ENCODE measurements at regions of chr9 and their contacts with region 1.

Region 1: GRCh38 chr9:109699019-109699418 is 81.0 kb upstream of the PALM2AKAP2 start:
- DNase-seq: no peak
- ATAC-seq: no peak
- H3K4me3 ChIP-seq: no peak overlapping the region
- H3K27ac ChIP-seq: no peak overlapping the region
- H3K4me1 ChIP-seq: no peaks in the 10 kb centered on the region
- H3K27me3 ChIP-seq: no peaks in the 10 kb centered on the region
- CTCF ChIP-seq: no peak
- POLR2A ChIP-seq: no peak

Region 2: GRCh38 chr9:110192531-110193261 is 493.7 kb after region 1 on chr9:
- intact Hi-C with region 1: loop called in 1 of 10 experiments (anchors 10 kb)
- DNase-seq: no peak
- ATAC-seq: peak in 2 of 4 donors; percentile 41 to 74
- H3K4me3 ChIP-seq: no peak overlapping the region
- H3K27ac ChIP-seq: peak overlapping the region in 10 of 12 donors; percentile 1 to 72 (median 34)
- H3K4me1 ChIP-seq: peaks cover 0 to 41% (median 3%) of the 10 kb centered on the region in 12 donors
- H3K27me3 ChIP-seq: no peaks in the 10 kb centered on the region
- CTCF ChIP-seq: no peak
- POLR2A ChIP-seq: no peak

Region 3: DNA sequence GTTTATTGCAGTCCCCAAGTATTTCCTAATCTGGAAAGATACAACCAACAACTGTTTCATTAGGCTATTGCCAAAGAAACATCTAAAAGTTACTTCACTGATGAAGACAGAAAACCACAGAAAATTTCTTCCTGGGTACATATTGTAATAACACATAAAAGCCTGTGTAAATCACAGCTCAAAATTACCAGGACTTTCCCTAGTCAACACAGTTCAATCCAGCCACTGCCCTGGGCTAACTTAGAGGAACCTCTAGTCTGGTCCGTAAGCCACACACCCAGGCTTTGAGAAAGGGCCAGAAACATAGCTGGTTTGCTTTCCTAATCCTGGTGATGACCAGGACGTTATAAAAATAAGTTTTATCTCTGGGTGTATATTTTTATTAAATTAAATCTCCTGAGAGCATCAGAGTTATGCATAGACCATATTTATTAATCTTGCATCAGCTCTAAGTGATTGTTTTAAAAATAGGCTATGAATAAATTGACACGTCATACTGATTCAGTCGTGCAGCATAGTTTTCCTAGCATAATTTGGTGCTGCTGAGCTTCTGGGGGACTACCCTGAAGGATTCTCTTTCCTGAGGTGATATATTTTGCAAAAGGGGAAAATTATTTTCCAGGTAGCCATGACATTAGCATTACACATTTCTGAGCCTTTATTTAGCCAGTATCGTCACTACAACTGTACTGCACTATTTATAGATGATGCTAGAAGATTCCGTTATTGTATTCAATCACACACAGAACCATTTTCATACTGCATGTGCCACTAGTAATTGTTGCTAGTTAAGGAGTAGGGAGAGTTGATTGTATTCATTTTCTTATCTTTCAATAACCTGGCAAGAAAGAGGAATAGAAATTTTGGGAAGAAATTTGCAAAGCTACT is 957.0 kb after region 1 on chr9:
- intact Hi-C with region 1: no loop called
- DNase-seq: no peak
- ATAC-seq: peak; percentile 65 to 91 (median 88)
- H3K4me3 ChIP-seq: peak overlapping the region in 8 of 12 donors; percentile 1 to 42 (median 12)
- H3K27ac ChIP-seq: peak overlapping the region in 10 of 12 donors; percentile 7 to 52 (median 18)
- H3K4me1 ChIP-seq: peaks cover 0 to 6% (median 0%) of the 10 kb centered on the region in 12 donors
- H3K27me3 ChIP-seq: no peaks in the 10 kb centered on the region
- CTCF ChIP-seq: no peak
- POLR2A ChIP-seq: no peak

Measured in heart left ventricle (tissue), 16 donors.